PC-9 (cell line): ENCODE measurements at regions of chr2 and their contacts with region 1.

Region 1: GRCh38 chr2:43158259-43158880 is 68.0 kb downstream of the ZFP36L2 start:
- DNase-seq: peak; percentile 75 to 88
- H3K4me3 ChIP-seq: peak overlapping the region; percentile 22; the same call in 1 of the 2 replicates
- H3K27ac ChIP-seq: peak overlapping the region; percentile 95
- H3K4me1 ChIP-seq: peaks cover 55% of the 10 kb centered on the region
- H3K27me3 ChIP-seq: no peaks in the 10 kb centered on the region
- CTCF ChIP-seq: no peak

Region 2: DNA sequence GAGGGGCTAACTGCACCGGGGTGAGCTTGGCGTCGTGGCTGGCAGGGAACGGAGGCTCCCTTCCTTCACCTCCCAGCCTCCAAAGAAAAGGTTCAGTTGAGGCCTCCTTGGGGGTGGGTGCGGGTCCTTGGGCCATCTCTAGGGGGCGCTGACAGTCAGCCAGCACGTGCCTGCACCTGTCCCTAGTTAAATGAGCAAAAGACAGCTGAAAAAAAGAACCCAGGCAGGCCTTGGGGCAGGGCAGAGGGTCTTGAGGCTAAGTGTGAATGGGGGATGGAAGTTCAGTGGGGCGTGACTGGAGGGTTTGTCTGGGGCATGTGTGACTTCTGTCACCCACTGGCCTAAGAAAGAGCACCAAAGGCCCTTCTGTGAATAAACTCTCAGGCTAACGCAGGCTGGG is 11.6 kb after region 1 on chr2:
- CTCF ChIA-PET with region 1: no interaction called
- POLR2A ChIA-PET with region 1: no interaction called
- intact Hi-C with region 1: loop called (anchors 1 kb)
- DNase-seq: peak; percentile 38 to 50
- H3K4me3 ChIP-seq: peak overlapping the region; percentile 53; the same call in 1 of the 2 replicates
- H3K27ac ChIP-seq: peak overlapping the region; percentile 97
- H3K4me1 ChIP-seq: peaks cover 74% of the 10 kb centered on the region
- H3K27me3 ChIP-seq: no peaks in the 10 kb centered on the region
- CTCF ChIP-seq: peak; percentile 96

Region 3: DNA sequence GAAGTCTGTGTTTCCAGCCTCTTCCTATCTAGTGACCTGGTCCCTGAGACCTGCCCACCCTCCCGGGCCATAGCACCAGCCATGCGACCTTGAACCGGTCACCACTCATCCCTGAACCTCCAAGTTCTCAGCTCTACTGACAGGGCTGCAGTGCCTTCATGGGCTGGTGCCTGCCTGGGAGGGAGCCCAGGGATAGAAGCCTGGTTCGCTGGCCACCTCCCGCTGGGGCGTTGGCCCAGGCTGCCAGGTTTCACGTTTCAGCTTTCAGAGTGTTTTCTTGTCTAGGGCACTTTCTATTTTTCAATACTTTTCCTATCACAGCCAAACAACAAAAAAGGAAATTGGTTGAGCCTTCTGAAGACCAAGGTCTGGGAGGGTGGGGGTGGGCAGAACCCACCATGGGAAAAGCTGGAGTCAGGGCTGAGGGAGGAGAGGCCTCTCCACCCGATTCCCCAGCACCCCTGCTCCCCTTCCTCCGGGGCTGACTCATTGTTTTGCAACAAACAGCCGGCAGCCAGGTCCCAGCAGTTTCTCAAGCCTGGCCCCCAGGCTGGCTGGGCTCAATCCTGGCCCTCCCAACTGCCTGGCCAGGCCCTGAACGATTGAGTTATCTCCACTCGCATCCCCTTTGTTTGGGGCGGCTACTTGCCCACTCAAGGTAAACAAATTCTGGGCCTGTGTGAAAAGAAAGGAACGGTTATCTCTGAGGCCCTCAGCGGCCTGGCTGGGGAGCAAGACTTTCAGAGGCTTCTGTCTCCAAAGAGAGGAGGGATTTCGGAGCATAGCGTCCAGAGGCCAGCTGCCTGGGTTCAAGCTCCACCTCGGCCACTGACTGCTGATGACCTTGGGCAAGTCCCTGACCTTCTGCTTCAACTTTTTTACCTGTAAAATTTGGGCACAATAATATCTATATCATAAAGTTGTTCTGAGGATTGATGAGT is 20.5 kb after region 1 on chr2:
- CTCF ChIA-PET with region 1: interaction called, 5 read pairs
- POLR2A ChIA-PET with region 1: no interaction called
- intact Hi-C with region 1: loop called (anchors 1 kb)
- DNase-seq: peak; percentile 90 to 91
- H3K4me3 ChIP-seq: peak overlapping the region; percentile 33; the same call in 1 of the 2 replicates
- H3K27ac ChIP-seq: peak overlapping the region; percentile 88
- H3K4me1 ChIP-seq: peaks cover 95% of the 10 kb centered on the region
- H3K27me3 ChIP-seq: no peaks in the 10 kb centered on the region
- CTCF ChIP-seq: no peak

Region 4: DNA sequence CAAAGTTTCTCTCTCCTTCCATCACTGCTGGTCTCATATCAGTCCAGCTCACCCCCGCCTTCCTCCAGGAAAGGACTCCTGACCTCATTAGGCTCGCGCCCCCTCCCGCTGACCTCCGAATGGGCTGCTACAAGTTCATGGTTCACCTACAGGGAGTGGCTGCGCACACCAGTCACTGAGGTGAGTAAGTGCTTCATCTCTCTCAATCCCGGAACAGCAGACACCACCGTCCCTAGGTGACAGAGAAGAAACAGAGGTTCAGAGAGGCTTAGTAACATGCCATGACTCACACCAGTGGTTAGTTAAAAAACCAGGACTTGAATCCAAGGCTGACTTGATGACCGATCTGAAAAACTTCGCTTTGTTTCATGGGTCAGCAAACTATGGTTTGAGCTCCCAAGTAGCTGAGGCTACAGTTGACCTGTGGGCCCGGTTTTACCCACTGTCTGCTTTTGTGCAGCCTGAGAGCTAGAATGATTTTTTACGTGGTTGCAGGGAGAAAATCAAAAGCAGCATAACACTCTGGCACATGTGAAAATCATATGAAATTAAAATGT is 26.0 kb after region 1 on chr2:
- CTCF ChIA-PET with region 1: no interaction called
- POLR2A ChIA-PET with region 1: no interaction called
- intact Hi-C with region 1: loop called (anchors 1 kb)
- DNase-seq: peak; percentile 71 to 98
- H3K4me3 ChIP-seq: no peak overlapping the region
- H3K27ac ChIP-seq: peak overlapping the region; percentile 80
- H3K4me1 ChIP-seq: peaks cover 76% of the 10 kb centered on the region
- H3K27me3 ChIP-seq: no peaks in the 10 kb centered on the region
- CTCF ChIP-seq: no peak

Region 5: GRCh38 chr2:43207553-43208293 is 49.4 kb after region 1 on chr2:
- CTCF ChIA-PET with region 1: interaction called, 8 read pairs
- POLR2A ChIA-PET with region 1: interaction called, 5 read pairs
- intact Hi-C with region 1: loop called (anchors 2 kb)
- DNase-seq: peak; percentile 50 to 91
- H3K4me3 ChIP-seq: peak overlapping the region; percentile 6; the same call in 1 of the 2 replicates
- H3K27ac ChIP-seq: peak overlapping the region; percentile 84
- H3K4me1 ChIP-seq: peaks cover 51% of the 10 kb centered on the region
- H3K27me3 ChIP-seq: no peaks in the 10 kb centered on the region
- CTCF ChIP-seq: no peak